Activated naive CD4-positive, alpha-beta T cell treated with anti-CD3 and anti-CD28 coated beads for 36 hours (primary cell): ENCODE measurements at regions of chr1 and their contacts with region 1.

Region 1: GRCh38 chr1:38046884-38047602 is 450 bp upstream of the POU3F1 start:
- DNase-seq: no peak
- H3K4me3 Mint-ChIP-seq: peak overlapping the region; percentile 65
- H3K27ac Mint-ChIP-seq: no peak overlapping the region
- H3K4me1 Mint-ChIP-seq: peaks cover 9% of the 10 kb centered on the region
- H3K27me3 Mint-ChIP-seq: peaks cover 43% of the 10 kb centered on the region

Region 2: DNA sequence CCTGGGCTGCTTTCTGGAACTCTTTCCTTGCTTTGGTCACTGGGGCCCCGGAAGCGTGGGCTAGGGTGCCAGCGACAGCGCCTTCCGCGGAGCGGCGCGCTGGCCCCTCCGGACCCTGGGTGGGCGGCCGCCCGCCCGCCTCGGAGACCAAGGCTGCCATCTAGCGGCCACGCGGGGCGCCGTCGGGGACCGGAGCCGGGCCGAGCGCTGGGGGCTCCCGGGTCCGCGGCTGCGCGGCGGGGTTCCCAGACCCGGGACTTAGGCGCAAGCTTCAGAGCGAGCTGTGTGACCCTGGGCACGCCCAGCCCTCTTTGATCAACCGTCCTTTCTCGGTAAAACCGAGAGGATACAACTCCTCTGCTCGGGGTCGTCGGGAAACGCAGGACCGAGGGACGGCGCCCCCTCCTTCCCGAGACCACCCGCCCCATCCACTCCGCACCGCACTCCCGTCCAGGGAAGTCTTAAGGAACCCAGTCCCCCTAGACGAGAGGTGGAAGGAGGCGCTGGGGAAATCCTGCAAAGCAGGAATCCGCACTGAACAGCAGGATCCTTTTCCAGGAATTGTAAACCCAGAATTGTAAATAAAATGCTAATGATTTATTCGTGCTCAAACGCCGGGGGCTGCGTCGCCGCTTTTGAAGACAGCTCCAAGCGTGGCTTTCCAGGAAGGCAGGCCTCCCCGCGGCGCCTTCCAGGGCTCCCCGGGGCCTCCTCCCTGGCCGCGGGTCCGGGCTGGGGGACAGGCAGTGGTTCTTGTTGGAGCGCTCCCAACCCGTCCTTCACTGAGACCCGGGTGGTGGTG is 771.3 kb after region 1 on chr1:
- CTCF ChIA-PET with region 1: no interaction called
- intact Hi-C with region 1: loop called (anchors 5 kb)
- DNase-seq: peak; percentile 33
- H3K4me3 Mint-ChIP-seq: no peak overlapping the region
- H3K27ac Mint-ChIP-seq: no peak overlapping the region
- H3K4me1 Mint-ChIP-seq: peaks cover 9% of the 10 kb centered on the region
- H3K27me3 Mint-ChIP-seq: peaks cover 52% of the 10 kb centered on the region